AG04450 (cell line): ENCODE measurements at regions of chr1 and their contacts with region 1.

Region 1: GRCh38 chr1:23634842-23635651 is 56.6 kb upstream of the RPL11 start:
- DNase-seq: peak; percentile 44
- H3K4me3 ChIP-seq: peak overlapping the region; percentile 64
- H3K27ac ChIP-seq: peak overlapping the region; percentile 73
- H3K27me3 ChIP-seq: peaks cover 6% of the 10 kb centered on the region
- CTCF ChIP-seq: peak; percentile 93

Region 2: DNA sequence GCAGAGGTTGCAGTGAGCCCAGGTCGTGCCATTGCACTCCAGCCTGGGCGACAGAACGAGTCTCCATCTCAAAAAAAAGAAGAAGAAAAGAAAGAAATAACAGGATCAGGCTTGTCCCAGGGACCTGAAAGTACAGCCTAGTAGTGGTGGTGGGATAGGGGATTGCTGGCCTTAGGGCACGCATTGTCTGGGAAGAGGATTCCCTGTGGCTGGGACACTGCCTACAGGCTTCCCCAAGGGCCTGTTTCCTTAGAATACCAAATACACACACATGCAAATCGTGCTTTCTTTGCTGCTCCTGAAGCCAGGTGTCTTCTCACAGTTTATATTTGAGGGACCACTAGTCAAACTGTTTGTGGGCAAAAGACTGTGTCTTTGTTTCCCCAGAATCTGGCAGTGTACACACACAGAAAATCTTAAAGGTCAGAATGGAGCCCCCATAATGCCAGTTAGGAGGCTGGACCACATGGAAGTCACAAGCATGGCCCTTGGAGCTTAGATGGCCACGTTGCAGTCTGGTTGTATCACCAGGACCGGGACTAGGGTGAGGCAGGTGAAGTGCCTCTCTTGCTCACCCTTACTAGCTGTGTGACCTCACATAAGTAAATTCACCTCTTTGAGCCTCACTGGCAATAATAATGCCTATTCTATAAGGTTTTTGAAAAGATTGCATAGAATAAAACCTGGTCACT is 138.4 kb before region 1 on chr1:
- CTCF ChIA-PET with region 1: interaction called, 36 read pairs
- POLR2A ChIA-PET with region 1: interaction called, 4 read pairs
- DNase-seq: no peak
- H3K4me3 ChIP-seq: no peak overlapping the region
- H3K27ac ChIP-seq: no peak overlapping the region
- H3K27me3 ChIP-seq: peaks cover 3% of the 10 kb centered on the region
- CTCF ChIP-seq: no peak

Region 3: DNA sequence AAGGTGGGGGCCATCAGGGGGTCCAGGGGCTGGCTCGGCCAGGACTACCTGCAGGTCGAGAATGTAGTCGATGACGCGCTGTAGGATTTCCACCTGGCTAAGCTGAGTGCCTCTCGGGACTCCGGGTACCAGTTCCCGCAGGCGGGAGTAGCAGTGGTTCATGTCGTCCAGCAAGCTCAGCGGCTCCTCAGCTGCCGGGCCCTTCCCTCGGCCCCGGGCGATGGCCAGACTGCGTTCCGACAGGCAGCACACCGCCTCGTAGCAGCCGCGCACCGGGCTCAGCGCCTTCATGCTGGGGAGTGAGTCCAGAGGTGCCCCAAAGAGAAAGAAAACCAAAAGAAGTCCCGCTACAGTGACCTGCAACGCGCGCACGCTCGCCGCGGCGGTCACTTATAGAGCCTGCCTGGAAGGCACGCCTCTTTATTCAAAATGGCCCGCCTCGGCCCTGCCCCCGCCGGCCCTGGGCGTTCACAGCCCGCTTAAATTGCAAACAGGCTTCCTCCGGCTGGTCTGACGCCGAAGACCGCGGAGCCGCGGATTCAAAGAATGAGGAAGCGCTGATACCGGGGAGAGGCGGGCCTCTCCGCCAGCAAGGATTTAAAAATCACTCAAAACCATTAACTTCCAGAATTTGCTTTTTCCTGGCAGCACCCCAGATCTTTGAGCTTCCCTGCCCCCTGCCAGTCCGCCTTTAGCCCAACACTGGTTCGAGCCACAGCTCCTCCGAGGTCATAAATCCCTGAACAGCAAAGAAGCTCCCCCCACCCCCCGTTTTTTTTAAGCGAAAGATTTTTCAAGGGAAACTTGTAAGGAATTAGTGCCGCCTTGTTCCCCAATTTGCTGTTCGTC is 75.7 kb before region 1 on chr1 and contains the start of gene ID3:
- CTCF ChIA-PET with region 1: interaction called, 51 read pairs
- POLR2A ChIA-PET with region 1: interaction called, 14 read pairs
- DNase-seq: peak; percentile 88
- H3K4me3 ChIP-seq: peak within 1 kb of the TSS; percentile 86
- H3K27ac ChIP-seq: peak within 1 kb of the TSS; percentile 98
- H3K27me3 ChIP-seq: no peaks in the 10 kb centered on the region
- CTCF ChIP-seq: no peak
- polyA plus RNA-seq, gene ID3: 15.3 and 25.0 TPM in 2 replicates

Region 4: GRCh38 chr1:23619299-23620188 is 15.5 kb before region 1 on chr1:
- CTCF ChIA-PET with region 1: interaction called, 29 read pairs
- POLR2A ChIA-PET with region 1: no interaction called
- DNase-seq: no peak
- H3K4me3 ChIP-seq: peak overlapping the region; percentile 36
- H3K27ac ChIP-seq: no peak overlapping the region
- H3K27me3 ChIP-seq: peaks cover 27% of the 10 kb centered on the region
- CTCF ChIP-seq: no peak

Region 5: DNA sequence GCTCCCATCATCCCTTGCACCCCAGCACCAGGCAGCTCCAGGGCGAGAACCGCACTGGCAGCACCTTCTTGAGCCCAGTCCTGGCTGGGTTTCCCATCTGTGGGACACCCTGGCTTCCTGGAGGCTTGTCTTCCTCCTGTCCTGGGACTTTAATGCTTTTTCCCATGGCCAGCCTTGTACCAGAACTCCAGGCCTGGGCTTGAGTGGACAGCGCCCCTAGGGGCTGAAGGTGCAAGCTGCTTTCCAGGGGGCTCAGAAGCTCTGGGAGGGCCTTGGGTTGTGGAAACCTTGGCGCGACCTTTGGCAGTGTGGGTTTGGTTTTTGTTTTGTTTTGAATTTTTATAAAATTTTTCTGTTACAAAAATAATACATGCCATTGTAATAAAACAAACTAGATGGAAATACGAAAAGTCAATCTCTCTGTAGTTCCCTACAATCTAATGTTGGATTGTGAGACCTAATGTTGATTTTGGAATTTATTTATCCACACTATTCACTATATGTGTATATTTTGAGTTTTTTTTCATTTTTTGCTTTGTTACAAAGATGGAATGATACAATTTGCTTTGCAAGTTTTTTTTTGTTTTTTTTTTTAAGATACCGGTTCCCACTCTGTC is 22.7 kb after region 1 on chr1:
- CTCF ChIA-PET with region 1: interaction called, 10 read pairs
- POLR2A ChIA-PET with region 1: interaction called, 10 read pairs
- DNase-seq: no peak
- H3K4me3 ChIP-seq: no peak overlapping the region
- H3K27ac ChIP-seq: no peak overlapping the region
- H3K27me3 ChIP-seq: peaks cover 1% of the 10 kb centered on the region
- CTCF ChIP-seq: peak; percentile 84

Region 6: GRCh38 chr1:23691499-23692307 is 56.7 kb after region 1 on chr1 and contains the start of gene RPL11:
- CTCF ChIA-PET with region 1: interaction called, 15 read pairs
- POLR2A ChIA-PET with region 1: interaction called, 8 read pairs
- DNase-seq: peak; percentile 94
- H3K4me3 ChIP-seq: peak within 1 kb of the TSS; percentile 91
- H3K27ac ChIP-seq: peak within 1 kb of the TSS; percentile 87
- H3K27me3 ChIP-seq: no peaks in the 10 kb centered on the region
- CTCF ChIP-seq: peak; percentile 80
- polyA plus RNA-seq, gene RPL11: 1,898 and 2,055 TPM in 2 replicates